ENCODE measurements at regions of chr2 and their contacts with region 1.

Region 1: DNA sequence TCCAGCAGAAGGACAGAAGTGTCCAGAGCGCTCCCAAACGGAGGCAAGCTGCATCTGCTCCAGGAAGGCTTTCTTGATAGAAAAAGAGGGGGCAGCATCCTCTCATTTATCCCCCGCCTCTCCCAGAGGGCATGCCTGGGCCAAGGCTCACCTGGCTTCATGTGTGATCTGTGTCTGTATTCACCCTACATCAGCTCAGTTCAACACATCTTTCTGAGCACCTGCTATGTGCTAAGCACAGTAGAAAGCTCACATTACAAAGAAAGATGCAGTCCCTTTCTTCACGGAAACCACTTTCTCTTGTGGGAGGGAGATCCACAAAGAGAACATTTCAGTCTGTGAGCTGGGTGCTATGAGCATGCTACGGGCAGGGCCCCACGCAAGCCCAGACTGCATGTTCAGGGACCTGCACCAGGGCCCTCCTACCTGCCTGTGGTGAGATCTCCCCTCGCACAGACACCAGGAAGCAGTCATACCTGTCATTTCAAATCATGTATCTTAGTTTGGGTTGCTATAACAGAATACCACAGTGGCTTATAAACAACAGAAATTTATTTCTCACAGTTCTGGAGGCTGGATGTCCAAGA is 90.7 kb downstream of the PDCL3 start:
- DNase-seq: no peak
- ATAC-seq: no peak
- H3K4me3 ChIP-seq: no peak overlapping the region
- H3K27ac ChIP-seq: no peak overlapping the region
- H3K4me1 ChIP-seq: no peaks in the 10 kb centered on the region
- H3K27me3 ChIP-seq: peaks cover 0 to under 1% (median 0%) of the 10 kb centered on the region in 9 donors
- CTCF ChIP-seq: no peak
- POLR2A ChIP-seq: no peak

Region 2: DNA sequence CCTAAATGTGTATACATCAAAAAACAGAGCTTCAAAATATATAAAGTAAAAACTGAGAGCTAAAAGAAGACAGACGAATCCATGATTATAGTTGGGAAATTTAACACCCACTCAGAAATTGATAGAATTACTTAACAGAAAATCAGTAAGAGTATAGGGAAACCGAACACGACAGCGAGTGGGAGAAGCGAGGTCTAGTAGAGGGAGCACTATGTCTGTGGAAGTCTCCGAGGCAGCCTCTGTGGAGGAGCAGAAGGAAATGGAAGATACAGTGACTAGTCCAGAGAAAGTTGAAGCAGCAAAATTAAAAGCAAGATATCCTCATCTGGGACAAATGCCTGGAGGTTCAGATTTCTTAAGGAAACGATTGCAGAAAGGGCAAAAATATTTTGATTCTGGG is 144.5 kb before region 1 on chr2:
- intact Hi-C with region 1: loop called in 1 of 10 experiments (anchors 10 kb)
- DNase-seq: no peak
- ATAC-seq: no peak
- H3K4me3 ChIP-seq: no peak overlapping the region
- H3K27ac ChIP-seq: no peak overlapping the region
- H3K4me1 ChIP-seq: no peaks in the 10 kb centered on the region
- H3K27me3 ChIP-seq: no peaks in the 10 kb centered on the region
- CTCF ChIP-seq: no peak
- POLR2A ChIP-seq: no peak

Region 3: DNA sequence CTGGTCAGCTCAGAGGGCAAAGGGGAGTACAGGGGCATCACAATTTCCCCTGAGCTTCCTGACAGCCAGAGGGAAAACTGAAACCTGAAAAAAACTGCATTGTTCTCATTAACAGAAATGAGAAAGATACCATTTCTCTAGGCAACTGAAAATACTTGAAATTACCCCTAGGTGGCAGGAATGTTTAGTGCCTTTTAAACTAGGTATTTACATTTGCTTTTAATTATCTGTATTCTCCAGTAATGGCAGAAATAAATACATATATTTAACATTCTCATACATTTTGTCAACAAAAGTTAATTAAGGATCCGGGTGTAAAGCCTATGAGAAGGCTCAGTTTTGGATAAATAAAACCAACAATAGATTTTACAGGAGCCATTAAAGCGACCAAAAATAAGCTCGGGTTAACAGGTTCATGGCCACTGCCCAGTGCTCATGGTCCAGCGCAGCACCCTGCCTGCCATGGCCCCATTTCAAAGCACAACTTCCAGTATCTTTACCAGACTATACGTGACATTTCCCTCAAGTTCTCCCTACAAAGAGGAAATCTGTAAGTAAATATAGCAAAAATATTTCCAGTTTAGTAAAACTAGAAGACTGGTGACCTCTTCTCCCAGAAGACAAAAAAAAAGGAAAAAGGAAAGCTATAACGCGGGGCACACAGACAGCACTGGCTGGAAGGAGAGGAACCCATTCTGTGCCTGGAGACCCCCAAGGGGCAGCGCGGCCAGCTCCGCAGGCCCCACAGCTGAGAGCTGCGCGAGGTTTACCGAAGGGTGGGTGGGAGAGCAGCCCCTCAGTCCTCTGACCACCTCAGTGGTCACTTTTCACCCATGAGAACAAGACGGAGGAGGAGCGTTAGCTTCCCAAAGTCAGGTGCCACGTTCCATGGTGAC is 383.3 kb after region 1 on chr2:
- intact Hi-C with region 1: no loop called
- DNase-seq: no peak
- ATAC-seq: no peak
- H3K4me3 ChIP-seq: no peak overlapping the region
- H3K27ac ChIP-seq: no peak overlapping the region
- H3K4me1 ChIP-seq: peaks cover 0 to 23% (median 0%) of the 10 kb centered on the region in 12 donors
- H3K27me3 ChIP-seq: no peaks in the 10 kb centered on the region
- CTCF ChIP-seq: peak; percentile 23 to 60 (median 46)
- POLR2A ChIP-seq: no peak